Mammary epithelial cell (primary cell): ENCODE measurements at regions of chr7 and their contacts with region 1.

Region 1: GRCh38 chr7:111486472-111487142 is 75.7 kb downstream of the IMMP2L start:
- DNase-seq: peak; percentile 31
- H3K4me3 ChIP-seq: no peak overlapping the region
- H3K27ac ChIP-seq: no peak overlapping the region
- H3K4me1 ChIP-seq: no peaks in the 10 kb centered on the region
- H3K27me3 ChIP-seq: no peaks in the 10 kb centered on the region
- CTCF ChIP-seq: peak; percentile 67 to 73

Region 2: GRCh38 chr7:109844362-109844761 is 1642.2 kb before region 1 on chr7:
- CTCF ChIA-PET with region 1: no interaction called
- dilution Hi-C with region 1: no loop called
- in situ Hi-C with region 1: no loop called
- intact Hi-C with region 1: loop called (anchors 2 kb)
- DNase-seq: no peak
- H3K4me3 ChIP-seq: no peak overlapping the region
- H3K27ac ChIP-seq: no peak overlapping the region
- H3K4me1 ChIP-seq: no peaks in the 10 kb centered on the region
- H3K27me3 ChIP-seq: no peaks in the 10 kb centered on the region
- CTCF ChIP-seq: peak; percentile 50 to 68

Region 3: GRCh38 chr7:111089822-111090426 is 396.7 kb before region 1 on chr7:
- CTCF ChIA-PET with region 1: no interaction called
- dilution Hi-C with region 1: no loop called
- in situ Hi-C with region 1: loop called (anchors 5 to 25 kb)
- intact Hi-C with region 1: loop called (anchors 1 kb)
- DNase-seq: peak; percentile 24
- H3K4me3 ChIP-seq: no peak overlapping the region
- H3K27ac ChIP-seq: no peak overlapping the region
- H3K4me1 ChIP-seq: no peaks in the 10 kb centered on the region
- H3K27me3 ChIP-seq: no peaks in the 10 kb centered on the region
- CTCF ChIP-seq: peak; percentile 71 to 76

Region 4: DNA sequence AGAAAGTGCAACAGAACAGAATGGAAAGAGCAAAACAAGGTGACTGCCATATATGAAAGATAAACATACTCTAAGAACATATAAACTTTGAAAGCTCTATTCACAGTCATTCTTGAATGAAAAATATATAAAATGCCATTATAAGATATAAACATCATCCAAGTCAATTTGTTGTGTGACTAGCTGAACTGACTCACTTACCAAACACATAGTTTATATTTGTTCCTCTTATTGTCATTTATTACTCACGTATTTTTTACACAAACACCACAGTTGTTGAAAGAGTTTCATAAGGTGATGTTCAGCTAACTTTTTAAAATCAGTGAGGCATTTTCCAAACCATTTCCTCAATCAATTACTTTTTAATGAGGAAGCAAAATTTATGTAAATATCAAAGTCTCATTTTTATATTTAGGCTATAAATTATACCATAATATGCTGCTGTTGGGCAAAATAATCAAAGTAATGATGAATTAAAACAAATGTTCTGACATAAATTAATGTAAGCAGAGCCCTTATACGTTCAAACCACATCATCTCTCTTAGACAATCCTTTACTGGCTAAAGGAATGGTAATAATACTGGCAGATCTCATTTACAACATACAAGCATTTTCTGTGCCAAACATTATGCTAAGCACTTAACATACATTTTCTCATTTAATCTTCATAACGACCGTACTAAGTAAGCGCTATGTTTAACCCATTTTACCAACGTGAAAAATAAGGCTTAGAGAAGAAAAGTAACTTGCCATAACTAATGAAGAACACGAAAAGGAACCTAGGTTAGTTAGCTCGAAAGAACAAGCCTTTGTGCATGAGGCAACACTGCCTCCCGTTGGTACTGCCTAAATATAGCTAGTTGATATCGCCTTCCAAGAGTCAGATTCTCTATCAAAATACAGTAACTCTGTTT is 388.3 kb before region 1 on chr7:
- CTCF ChIA-PET with region 1: no interaction called
- dilution Hi-C with region 1: no loop called
- in situ Hi-C with region 1: loop called in 1 of 2 experiments (anchors 25 kb)
- intact Hi-C with region 1: no loop called
- DNase-seq: no peak
- H3K4me3 ChIP-seq: no peak overlapping the region
- H3K27ac ChIP-seq: no peak overlapping the region
- H3K4me1 ChIP-seq: no peaks in the 10 kb centered on the region
- H3K27me3 ChIP-seq: no peaks in the 10 kb centered on the region
- CTCF ChIP-seq: peak; percentile 47 to 59

Region 5: GRCh38 chr7:111150709-111151108 is 335.9 kb before region 1 on chr7:
- CTCF ChIA-PET with region 1: no interaction called
- dilution Hi-C with region 1: no loop called
- in situ Hi-C with region 1: no loop called
- intact Hi-C with region 1: no loop called
- DNase-seq: no peak
- H3K4me3 ChIP-seq: no peak overlapping the region
- H3K27ac ChIP-seq: no peak overlapping the region
- H3K4me1 ChIP-seq: no peaks in the 10 kb centered on the region
- H3K27me3 ChIP-seq: no peaks in the 10 kb centered on the region
- CTCF ChIP-seq: no peak

Region 6: GRCh38 chr7:111329367-111330234 is 157.0 kb before region 1 on chr7:
- CTCF ChIA-PET with region 1: no interaction called
- dilution Hi-C with region 1: no loop called
- in situ Hi-C with region 1: no loop called
- intact Hi-C with region 1: loop called (anchors 2 kb)
- DNase-seq: no peak
- H3K4me3 ChIP-seq: no peak overlapping the region
- H3K27ac ChIP-seq: no peak overlapping the region
- H3K4me1 ChIP-seq: peaks cover 6% of the 10 kb centered on the region
- H3K27me3 ChIP-seq: no peaks in the 10 kb centered on the region
- CTCF ChIP-seq: peak in 1 of 2 donors; percentile 37

Region 7: DNA sequence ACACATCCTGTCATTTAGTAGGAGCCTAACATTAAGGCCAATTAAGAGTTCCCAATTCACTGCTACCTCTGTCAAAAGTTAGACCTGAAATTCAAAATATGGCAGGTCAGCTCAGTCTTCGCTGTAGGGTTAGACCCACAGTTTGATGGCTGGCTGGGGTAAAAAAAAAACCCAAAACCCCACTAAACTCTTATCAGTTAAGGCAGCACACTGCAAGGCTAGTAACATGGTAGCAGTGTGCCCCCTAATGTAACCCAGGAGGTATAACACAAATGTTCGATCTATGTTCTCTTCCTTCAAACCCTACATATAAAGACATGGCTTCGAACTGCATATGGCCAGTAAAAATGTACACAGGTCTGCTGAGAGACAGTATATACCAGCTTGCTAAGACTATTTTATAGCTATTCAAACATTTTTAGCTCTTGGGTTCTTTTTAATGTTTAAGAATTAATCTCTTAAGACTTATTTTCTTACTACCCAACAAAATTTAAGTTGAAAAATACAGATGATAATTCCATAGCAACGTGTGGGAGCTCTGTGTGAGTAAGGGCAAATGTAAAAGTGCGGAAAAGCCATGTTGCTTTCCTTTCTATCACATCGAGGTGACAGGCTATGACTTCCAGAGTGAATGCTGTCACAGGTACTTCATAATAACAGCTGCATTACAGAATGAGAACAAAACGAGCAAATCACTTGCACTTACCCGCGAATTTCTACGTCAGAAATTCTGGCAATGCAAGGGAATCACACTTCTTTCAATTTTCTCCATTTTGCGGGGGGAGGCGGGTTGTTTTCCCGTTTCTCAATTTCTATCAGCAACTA is 244.1 kb after region 1 on chr7:
- CTCF ChIA-PET with region 1: no interaction called
- dilution Hi-C with region 1: no loop called
- in situ Hi-C with region 1: loop called in 1 of 2 experiments (anchors 10 kb)
- intact Hi-C with region 1: loop called (anchors 2 kb)
- DNase-seq: peak; percentile 21
- H3K4me3 ChIP-seq: no peak overlapping the region
- H3K27ac ChIP-seq: no peak overlapping the region
- H3K4me1 ChIP-seq: no peaks in the 10 kb centered on the region
- H3K27me3 ChIP-seq: no peaks in the 10 kb centered on the region
- CTCF ChIP-seq: peak; percentile 71 to 75

Region 8: GRCh38 chr7:111735661-111736551 is 249.3 kb after region 1 on chr7:
- CTCF ChIA-PET with region 1: no interaction called
- dilution Hi-C with region 1: no loop called
- in situ Hi-C with region 1: loop called in 1 of 2 experiments (anchors 10 kb)
- intact Hi-C with region 1: loop called (anchors 2 kb)
- DNase-seq: peak; percentile 54
- H3K4me3 ChIP-seq: no peak overlapping the region
- H3K27ac ChIP-seq: no peak overlapping the region
- H3K4me1 ChIP-seq: peaks cover 5% of the 10 kb centered on the region
- H3K27me3 ChIP-seq: no peaks in the 10 kb centered on the region
- CTCF ChIP-seq: peak; percentile 72 to 81